ENCODE measurements at regions of chr20 and their contacts with region 1.

Region 1: DNA sequence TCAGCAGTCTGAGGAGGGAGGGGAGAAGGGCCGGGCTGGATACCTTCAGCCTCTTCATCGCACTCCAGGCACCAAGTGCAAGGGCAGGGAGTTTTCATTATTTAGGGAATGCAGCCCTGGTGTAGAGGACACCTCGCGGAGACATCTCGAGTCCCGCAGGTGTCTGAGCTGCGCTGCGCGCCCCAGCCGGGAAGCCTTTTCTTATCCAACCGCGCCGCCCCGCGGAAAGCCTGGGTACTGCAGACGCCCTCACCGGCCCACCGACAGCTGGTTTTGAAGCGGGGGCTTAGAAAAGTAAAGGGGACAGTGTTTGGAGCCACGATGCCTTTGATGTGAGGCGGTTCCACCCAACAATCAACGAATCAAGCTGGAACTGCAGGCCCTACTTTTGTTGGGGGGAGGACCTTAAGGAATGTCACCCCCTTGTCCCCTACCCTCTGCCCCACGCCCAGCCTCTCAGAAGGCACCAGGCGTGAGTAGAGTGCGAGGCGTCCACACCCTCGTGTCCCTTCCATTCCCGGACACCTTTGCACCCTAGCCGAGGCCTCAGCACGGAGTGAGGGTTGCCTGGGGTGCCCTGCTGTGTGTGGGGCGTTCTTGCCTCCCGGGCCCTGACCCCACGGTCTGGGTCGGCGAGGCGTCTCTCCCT is 8.6 kb downstream of the NKX2-2 start:
- DNase-seq: peak; percentile 67
- H3K4me3 Mint-ChIP-seq: peak overlapping the region; percentile 39
- H3K27ac Mint-ChIP-seq: no peak overlapping the region
- H3K4me1 Mint-ChIP-seq: peaks cover 28% of the 10 kb centered on the region
- H3K27me3 Mint-ChIP-seq: peaks cover 51% of the 10 kb centered on the region

Region 2: DNA sequence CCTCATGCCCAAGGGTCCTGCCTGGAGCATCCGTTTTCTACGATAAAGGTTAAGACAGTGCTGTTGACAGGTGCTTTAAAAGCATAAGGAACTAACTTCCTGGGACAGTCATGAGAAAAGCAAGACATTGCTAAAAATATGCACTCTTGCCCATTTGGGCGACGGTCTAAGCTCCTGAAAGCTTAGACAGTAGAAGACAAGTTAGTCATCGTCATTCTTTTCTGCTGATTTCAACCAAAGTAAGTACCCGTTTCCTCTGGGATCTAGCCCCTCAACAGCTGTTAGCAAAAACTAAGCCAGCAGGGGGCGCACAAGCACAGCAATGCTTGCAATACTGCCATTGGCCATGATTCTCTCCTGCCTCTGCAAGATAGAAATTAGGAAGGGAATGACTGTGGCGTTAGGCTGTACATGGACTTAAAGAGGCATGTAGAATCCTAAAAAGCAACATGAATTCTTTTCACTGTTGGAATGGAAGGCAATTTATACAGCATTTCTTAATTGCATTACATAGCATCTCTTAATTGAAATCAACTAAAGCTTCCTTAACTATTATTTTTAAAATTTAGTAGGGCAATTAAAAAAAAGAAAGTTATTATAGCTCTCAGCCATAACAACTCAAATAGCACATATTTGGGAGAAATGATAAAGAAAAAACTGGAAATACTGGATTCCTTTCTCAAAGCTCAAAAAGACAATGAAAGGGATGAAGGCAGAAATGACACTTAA is 645.0 kb before region 1 on chr20:
- intact Hi-C with region 1: loop called (anchors 1 kb)
- DNase-seq: peak; percentile 61
- H3K4me3 Mint-ChIP-seq: no peak overlapping the region
- H3K27ac Mint-ChIP-seq: no peak overlapping the region
- H3K4me1 Mint-ChIP-seq: no peaks in the 10 kb centered on the region
- H3K27me3 Mint-ChIP-seq: peaks cover 7% of the 10 kb centered on the region

Region 3: GRCh38 chr20:21099751-21100577 is 405.3 kb before region 1 on chr20:
- intact Hi-C with region 1: loop called (anchors 1 kb)
- DNase-seq: peak; percentile 45
- H3K4me3 Mint-ChIP-seq: peak overlapping the region; percentile 83
- H3K27ac Mint-ChIP-seq: no peak overlapping the region
- H3K4me1 Mint-ChIP-seq: peaks cover 33% of the 10 kb centered on the region
- H3K27me3 Mint-ChIP-seq: peaks cover 80% of the 10 kb centered on the region

Region 4: GRCh38 chr20:21395666-21396598 is 109.4 kb before region 1 on chr20:
- intact Hi-C with region 1: loop called (anchors 1 kb)
- DNase-seq: peak; percentile 24
- H3K4me3 Mint-ChIP-seq: peak overlapping the region; percentile 56
- H3K27ac Mint-ChIP-seq: peak overlapping the region; percentile 46
- H3K4me1 Mint-ChIP-seq: peaks cover 20% of the 10 kb centered on the region
- H3K27me3 Mint-ChIP-seq: peaks cover 74% of the 10 kb centered on the region

Region 5: DNA sequence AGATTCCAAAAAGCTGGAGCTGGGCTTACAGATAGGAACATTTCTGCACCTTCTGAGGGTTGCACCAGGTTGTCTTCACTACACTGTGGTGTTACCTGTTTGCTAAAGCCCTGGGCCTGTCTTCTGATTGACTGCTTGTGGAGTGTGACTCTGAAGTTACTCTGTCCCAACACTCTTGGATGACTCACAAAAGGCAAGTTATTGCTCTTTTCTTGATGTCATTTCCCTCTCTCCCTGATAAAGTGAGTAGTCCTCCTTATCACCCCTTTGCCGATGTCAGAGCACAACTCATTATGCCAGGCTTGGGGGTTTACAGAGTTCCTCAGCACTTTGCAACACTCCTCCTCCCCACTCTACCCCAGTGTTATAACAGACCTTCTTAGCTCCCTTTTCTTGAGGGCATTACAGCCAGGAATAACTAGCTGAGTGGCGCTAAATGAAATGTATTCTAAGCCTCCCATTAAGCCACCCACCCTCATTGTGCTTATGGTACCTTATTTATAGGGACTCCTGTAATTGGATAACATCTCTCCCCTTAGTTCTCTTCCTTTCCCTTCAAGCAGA is 71.9 kb before region 1 on chr20:
- intact Hi-C with region 1: no loop called
- DNase-seq: no peak
- H3K4me3 Mint-ChIP-seq: no peak overlapping the region
- H3K27ac Mint-ChIP-seq: no peak overlapping the region
- H3K4me1 Mint-ChIP-seq: no peaks in the 10 kb centered on the region
- H3K27me3 Mint-ChIP-seq: peaks cover 28% of the 10 kb centered on the region

Region 6: DNA sequence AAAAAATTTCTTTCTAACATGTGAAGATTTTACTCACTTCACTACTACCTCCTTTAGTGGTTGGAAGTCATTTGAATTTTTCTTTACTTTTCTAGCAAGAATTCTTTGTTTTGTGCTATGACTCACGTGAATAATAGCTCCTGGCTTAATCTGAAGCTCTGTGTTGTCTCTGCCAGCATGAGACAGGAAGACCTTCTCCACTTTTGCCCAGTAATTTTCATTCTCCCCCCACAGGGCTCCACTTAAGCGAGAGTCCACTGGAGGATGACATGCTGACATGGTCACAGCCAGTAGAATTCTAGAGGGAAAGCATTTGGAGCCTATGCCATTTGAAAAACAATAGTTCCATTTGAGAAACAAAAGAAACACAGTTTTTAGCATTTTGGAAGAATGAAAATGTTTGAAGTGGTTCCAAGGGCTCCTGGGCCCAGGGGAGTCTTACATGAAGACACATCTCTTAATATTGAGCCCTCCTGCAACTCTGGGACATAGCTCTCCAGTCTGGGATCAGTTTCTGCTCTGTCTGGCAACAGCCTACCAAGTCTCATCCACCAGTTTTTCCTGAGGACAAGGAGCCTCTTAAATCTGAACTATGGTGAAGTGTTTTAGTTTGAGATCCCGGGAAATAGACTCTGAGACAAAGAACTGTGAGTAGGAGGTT is 431.6 kb after region 1 on chr20:
- intact Hi-C with region 1: no loop called
- DNase-seq: no peak
- H3K4me3 Mint-ChIP-seq: no peak overlapping the region
- H3K27ac Mint-ChIP-seq: no peak overlapping the region
- H3K4me1 Mint-ChIP-seq: no peaks in the 10 kb centered on the region
- H3K27me3 Mint-ChIP-seq: no peaks in the 10 kb centered on the region

Measured in activated T-helper 2 cell treated with anti-CD3 and anti-CD28 coated beads, Interferon-gamma antibody, Interleukin-2, Interleukin-4, amounts not matched to agents 10 μg/mL and 5 μg/mL and 100 μg/mL, durations not matched to agents 14 hours and 24 hours and 36 hours (primary cell).